Heart right ventricle (tissue), 16 donors: ENCODE measurements at regions of chr4 and their contacts with region 1.

Region 1: GRCh38 chr4:45033676-45034419 is 307.5 kb upstream of the GNPDA2 start:
- DNase-seq: peak; percentile 20 to 42
- ATAC-seq: peak; percentile 74 to 99 (median 95)
- H3K4me3 ChIP-seq: no peak overlapping the region
- H3K27ac ChIP-seq: peak overlapping the region in 7 of 10 donors; percentile 19 to 66 (median 37)
- H3K4me1 ChIP-seq: peaks cover 0 to 12% (median 0%) of the 10 kb centered on the region in 9 donors
- H3K27me3 ChIP-seq: no peaks in the 10 kb centered on the region
- CTCF ChIP-seq: no peak

Region 2: GRCh38 chr4:45072981-45073380 is 39.1 kb after region 1 on chr4:
- intact Hi-C with region 1: no loop called
- DNase-seq: no peak
- ATAC-seq: no peak
- H3K4me3 ChIP-seq: no peak overlapping the region
- H3K27ac ChIP-seq: no peak overlapping the region
- H3K4me1 ChIP-seq: no peaks in the 10 kb centered on the region
- H3K27me3 ChIP-seq: no peaks in the 10 kb centered on the region
- CTCF ChIP-seq: no peak

Region 3: DNA sequence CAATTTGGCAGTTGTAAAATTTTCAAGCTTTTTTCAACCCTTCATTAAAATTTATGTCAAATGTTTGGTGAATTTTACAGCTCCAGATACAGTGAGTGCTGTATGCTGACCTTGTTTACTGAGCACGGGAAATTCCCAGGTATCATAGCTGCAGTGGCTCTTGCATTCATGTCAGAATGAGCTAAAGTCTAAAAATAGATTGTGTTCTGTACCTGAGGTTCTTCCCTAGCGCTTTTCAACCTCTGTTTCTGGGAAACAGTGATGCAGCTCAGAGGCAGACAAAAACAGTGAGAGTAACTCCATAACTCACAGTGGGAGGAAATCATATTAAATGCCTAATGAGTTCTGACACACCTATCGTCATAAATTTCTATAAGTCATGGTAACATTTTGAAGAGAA is 86.3 kb after region 1 on chr4:
- intact Hi-C with region 1: loop called in 1 of 10 experiments (anchors 5 kb)
- DNase-seq: peak in 1 of 2 donors; percentile 6
- ATAC-seq: peak; percentile 34 to 98 (median 96)
- H3K4me3 ChIP-seq: no peak overlapping the region
- H3K27ac ChIP-seq: peak overlapping the region in 7 of 10 donors; percentile 2 to 59 (median 43)
- H3K4me1 ChIP-seq: peaks cover 0 to 9% (median 0%) of the 10 kb centered on the region in 9 donors
- H3K27me3 ChIP-seq: no peaks in the 10 kb centered on the region
- CTCF ChIP-seq: no peak

Region 4: GRCh38 chr4:45160951-45161350 is 127.1 kb after region 1 on chr4:
- intact Hi-C with region 1: no loop called
- DNase-seq: no peak
- ATAC-seq: no peak
- H3K4me3 ChIP-seq: no peak overlapping the region
- H3K27ac ChIP-seq: no peak overlapping the region
- H3K4me1 ChIP-seq: no peaks in the 10 kb centered on the region
- H3K27me3 ChIP-seq: no peaks in the 10 kb centered on the region
- CTCF ChIP-seq: no peak

Region 5: DNA sequence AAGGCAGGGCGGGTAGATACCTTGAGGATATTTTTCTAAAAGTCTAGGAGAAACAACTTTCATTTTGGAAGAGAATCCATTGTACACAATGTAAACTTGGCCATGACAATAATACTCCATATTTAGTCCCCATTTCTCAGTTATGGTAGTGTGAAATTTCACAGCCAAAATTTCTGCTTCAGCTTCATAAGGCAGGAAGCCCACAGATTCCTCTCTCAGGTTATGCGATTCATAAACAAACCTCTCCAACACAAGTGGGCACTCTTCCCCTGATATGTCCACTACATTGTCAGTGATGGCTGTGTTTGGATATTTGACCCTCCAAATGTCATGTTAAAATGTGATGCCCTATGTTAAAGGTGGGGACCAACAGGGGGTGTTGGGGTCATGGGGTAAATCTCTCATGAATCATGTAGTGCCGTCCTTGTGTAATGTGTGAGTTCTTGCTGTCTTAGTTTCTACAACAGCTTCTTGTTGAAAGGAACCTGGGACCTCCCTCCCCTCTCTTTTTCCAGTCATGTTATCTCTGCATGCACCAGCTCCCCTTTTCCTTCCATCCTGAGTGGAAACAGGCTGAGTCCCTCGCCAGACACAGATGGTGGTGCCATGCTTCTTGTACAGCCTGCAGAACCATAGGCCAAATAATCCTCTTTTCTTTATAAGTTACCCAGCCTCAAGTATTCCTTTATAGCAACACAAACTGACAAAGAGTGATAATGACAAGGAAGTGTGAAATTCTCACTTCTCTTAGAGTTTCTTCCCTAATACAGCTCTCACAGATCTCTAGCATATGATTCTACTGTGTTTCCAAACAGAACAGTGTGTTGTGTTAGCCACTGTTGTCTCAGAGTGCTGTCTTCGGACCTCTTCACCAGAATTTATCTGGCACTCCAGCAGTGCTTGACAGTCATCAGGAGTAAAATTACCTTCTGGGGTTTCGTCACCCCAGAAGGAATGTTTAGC is 290.9 kb after region 1 on chr4:
- intact Hi-C with region 1: loop called in 1 of 10 experiments (anchors 5 kb)
- DNase-seq: no peak
- ATAC-seq: peak in 7 of 8 donors; percentile 40 to 96 (median 78)
- H3K4me3 ChIP-seq: no peak overlapping the region
- H3K27ac ChIP-seq: no peak overlapping the region
- H3K4me1 ChIP-seq: peaks cover 0 to 5% (median 0%) of the 10 kb centered on the region in 9 donors
- H3K27me3 ChIP-seq: no peaks in the 10 kb centered on the region
- CTCF ChIP-seq: no peak